ENCODE measurements at regions of chr5 and their contacts with region 1.

Region 1: GRCh38 chr5:167271081-167271480 is 1020.4 kb upstream of the WWC1 start:
- DNase-seq: no peak
- H3K4me3 ChIP-seq: no peak overlapping the region
- H3K27ac ChIP-seq: no peak overlapping the region
- H3K4me1 ChIP-seq: no peaks in the 10 kb centered on the region
- H3K27me3 ChIP-seq: no peaks in the 10 kb centered on the region
- CTCF ChIP-seq: no peak

Region 2: GRCh38 chr5:167217097-167217743 is 53.9 kb before region 1 on chr5:
- CTCF ChIA-PET with region 1: no interaction called
- POLR2A ChIA-PET with region 1: interaction called, 14 read pairs
- intact Hi-C with region 1: no loop called
- DNase-seq: no peak
- H3K4me3 ChIP-seq: no peak overlapping the region
- H3K27ac ChIP-seq: no peak overlapping the region
- H3K4me1 ChIP-seq: no peaks in the 10 kb centered on the region
- H3K27me3 ChIP-seq: no peaks in the 10 kb centered on the region
- CTCF ChIP-seq: 0 out of 2 replicates have a peak, but pooled peaks have one; percentile 18

Region 3: DNA sequence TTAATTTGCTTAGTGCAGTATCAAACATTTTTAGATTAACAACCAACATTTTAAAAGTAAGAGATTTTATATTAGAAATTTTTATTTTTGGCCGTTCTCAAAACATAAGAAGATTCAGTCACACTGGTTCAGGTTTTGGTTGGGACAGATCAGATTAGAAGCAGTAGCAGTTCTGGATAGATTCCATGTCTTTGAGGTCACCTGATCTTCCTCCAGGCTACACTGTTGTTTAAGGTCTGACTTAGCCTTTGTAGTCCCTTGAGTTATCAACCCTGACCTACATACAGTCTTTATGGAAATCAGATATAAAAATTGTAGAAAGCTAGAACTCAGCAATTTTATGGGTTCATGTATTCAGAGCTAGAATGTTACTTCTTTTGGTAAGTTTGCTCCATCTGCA is 110.4 kb after region 1 on chr5:
- CTCF ChIA-PET with region 1: no interaction called
- POLR2A ChIA-PET with region 1: no interaction called
- intact Hi-C with region 1: no loop called
- DNase-seq: no peak
- H3K4me3 ChIP-seq: no peak overlapping the region
- H3K27ac ChIP-seq: no peak overlapping the region
- H3K4me1 ChIP-seq: no peaks in the 10 kb centered on the region
- H3K27me3 ChIP-seq: 0 out of 2 replicates have a peak, but pooled peaks cover 3% of the 10 kb centered on the region
- CTCF ChIP-seq: no peak

Measured in PC-9 (cell line).